ENCODE measurements at regions of chr17 and their contacts with region 1.

Region 1: GRCh38 chr17:17141860-17142552 is 64.1 kb downstream of the PLD6 start:
- DNase-seq: no peak
- H3K27ac ChIP-seq: peak overlapping the region; percentile 64
- CTCF ChIP-seq: peak; percentile 80

Region 2: DNA sequence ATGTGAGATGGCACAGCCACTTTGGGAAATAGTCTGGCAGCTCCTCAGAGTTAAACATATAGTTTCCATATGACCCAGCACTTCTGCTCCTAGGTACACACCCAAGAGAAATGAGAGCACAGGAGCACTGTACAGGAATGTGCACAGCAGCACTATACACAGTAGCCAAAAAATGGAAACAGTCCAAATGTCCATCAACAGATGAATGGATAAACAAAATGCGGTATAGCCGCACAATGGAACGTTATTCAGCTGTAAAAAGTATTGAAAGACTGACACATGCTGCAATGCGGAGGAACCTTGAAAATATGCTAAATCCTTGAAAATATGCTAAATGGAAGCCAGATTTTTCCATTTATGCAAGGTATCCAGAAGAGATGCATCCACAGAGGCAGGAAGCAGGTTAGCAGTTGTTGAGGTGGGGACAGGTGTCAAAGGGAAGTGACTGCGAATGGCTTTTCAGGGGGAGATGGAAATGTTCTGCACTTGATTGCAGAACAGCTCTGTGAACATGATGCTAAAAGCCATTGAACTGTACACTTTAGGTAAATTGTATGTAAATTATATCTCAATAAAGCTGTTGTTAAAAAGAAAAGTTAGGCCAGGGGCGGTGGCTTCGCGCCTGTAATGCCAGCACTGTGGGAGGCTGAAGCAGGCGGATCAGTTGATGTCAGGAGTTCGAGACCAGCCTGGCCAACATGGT is 19.1 kb before region 1 on chr17:
- CTCF ChIA-PET with region 1: no interaction called
- POLR2A ChIA-PET with region 1: no interaction called
- DNase-seq: no peak
- H3K27ac ChIP-seq: peak overlapping the region; percentile 22; the same call in 1 of the 2 replicates
- CTCF ChIP-seq: no peak

Region 3: DNA sequence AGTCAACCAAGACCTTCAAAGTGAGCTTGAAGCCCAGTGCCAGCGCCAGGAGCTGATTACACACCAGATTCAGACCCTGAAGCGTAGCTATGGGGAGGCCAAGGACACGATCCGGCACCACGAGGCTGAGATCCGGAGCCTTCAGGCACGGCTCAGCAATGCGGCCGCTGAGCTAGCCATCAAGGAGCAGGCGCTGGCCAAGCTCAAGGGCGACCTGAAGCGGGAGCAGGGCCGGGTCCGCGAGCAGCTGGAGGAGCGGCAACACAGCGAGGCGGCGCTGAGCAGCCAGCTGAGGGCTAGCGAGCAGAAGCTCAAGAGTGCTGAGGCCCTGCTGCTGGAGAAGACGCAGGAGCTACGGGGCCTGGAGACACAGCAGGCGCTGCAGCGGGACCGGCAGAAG is 22.1 kb after region 1 on chr17:
- CTCF ChIA-PET with region 1: interaction called, 10 read pairs
- POLR2A ChIA-PET with region 1: no interaction called
- DNase-seq: no peak
- H3K27ac ChIP-seq: peak overlapping the region; percentile 15
- CTCF ChIP-seq: no peak

Region 4: DNA sequence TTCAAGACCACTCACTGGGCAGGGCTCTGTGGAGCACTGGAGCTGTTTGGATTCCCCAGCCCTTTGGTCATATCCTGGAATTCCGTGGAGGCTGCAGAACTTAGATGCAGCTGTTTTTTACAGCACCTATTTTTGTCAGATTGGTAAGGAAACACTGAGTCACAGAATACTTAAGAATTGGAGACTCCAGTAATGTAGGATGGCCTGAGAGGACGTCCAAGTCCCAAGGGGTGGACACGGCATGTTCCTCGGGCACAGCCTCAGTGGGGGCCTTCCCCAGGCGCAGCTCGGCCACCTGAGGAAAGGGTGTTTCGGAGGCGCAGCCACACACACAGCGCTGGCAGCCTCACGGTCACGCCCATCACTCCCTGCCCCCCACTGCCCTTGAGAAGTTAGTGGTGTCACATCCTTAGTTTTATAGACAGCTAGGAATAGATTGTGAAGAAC is 49.4 kb after region 1 on chr17:
- CTCF ChIA-PET with region 1: no interaction called
- POLR2A ChIA-PET with region 1: no interaction called
- DNase-seq: no peak
- H3K27ac ChIP-seq: peak overlapping the region; percentile 50
- CTCF ChIP-seq: no peak